Posterior cingulate gyrus (tissue), 11 donors: ENCODE measurements at regions of chr11 and their contacts with region 1.

Region 1: DNA sequence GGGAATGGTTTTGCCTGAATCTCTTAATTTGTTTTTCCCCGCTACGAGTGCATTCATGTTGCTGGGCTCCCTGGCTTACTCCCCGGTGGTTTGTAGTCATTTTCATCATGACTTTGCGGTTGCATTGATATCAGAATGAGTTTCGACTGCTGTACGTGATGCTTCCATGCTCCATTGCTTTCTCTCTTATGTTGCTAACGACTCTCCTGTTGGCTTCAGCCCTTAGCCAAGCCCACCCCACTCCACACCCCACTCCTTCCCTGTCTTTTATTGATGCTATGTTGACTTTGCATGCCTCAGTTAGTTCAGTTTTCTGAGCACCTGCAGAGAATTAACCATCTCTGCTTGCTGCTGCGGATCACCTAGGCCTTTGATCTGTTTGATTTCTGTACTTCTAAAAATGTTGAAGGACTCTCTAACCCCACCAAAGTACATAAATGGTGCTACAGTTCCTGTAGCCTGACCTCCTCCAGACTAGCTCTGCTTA is 65.3 kb downstream of the ARFGAP2 start:
- DNase-seq: no peak

Region 2: DNA sequence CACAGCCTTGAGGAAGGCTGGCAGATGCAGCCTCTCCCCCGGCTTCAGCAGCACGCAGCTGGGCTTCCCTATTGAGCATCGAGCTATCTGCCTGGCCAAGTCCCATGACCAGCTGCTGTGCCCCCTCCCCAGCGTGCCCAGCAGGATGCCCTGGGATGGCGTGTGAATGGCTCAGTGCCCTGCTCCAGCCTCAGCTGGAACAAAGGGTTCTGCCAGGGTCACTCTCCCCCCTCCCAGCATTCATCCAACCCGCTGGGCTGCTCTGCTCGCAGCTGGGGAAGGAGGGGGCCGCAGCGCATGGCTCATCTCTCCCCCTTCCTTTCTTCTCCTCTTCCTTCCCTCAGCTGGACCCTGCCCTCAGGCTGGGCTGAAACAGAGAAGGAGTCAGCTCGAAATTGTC is 207.5 kb before region 1 on chr11:
- intact Hi-C with region 1: loop called (anchors 5 kb)
- DNase-seq: peak; percentile 90 to 99 (median 95)

Region 3: GRCh38 chr11:47443042-47443700 is 331.8 kb after region 1 on chr11:
- intact Hi-C with region 1: no loop called
- DNase-seq: peak in 8 of 10 donors; percentile 28 to 94 (median 71)